ENCODE measurements at regions of chr17 and their contacts with region 1.

Region 1: DNA sequence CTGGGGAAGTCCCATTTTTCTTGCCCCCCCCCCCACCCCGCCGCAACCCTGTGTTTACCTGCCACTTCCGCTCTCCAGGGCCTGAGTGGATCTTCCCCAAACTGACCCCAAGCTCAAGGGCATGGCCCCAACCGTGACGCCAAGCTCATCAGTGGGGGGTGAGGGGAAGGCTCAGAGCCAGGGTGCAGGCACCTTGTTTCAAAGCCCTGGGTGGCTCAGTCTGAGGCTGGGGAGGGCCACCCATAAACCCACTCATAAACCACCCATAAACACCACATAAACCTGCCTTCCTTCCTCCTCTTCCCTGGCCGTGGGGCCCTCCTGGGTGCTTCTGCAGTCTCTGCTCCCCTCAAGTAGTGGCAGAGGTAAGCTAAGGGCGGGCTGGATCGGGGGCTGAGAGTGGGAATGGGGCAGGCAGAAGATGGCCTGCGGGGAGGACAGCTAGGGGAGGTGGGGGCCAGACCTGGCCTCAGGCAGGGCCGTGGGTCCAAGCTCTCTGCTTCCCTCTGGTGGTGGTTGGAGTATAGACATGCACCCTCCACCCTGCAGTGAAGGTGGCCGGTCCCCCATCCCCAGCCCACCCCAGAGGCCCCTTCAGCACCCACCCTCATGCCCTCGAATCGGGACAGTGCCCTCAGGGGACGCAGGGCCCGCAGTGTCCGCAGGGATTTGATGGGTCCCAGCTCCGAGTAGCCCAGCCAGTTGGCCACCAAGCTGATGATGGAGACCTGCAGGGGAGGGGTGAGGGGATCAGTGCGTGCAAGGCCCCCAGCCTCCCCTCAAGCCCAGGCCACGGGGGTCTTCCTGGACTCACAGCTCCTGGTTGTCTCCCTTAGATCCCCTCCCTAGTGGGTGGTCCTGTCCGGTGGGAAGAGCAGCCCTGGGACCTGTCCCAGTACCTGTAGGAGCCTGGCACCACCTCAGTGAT is 14.6 kb upstream of the CD79B start:
- DNase-seq: peak; percentile 23
- H3K4me3 ChIP-seq: no peak overlapping the region
- H3K27ac ChIP-seq: no peak overlapping the region
- H3K4me1 ChIP-seq: no peaks in the 10 kb centered on the region
- H3K27me3 ChIP-seq: no peaks in the 10 kb centered on the region
- CTCF ChIP-seq: peak; percentile 38 to 94
- POLR2A ChIP-seq: no peak

Region 2: GRCh38 chr17:63904316-63904715 is 42.4 kb before region 1 on chr17:
- CTCF ChIA-PET with region 1: interaction called, 13 read pairs
- POLR2A ChIA-PET with region 1: no interaction called
- dilution Hi-C with region 1: no loop called
- intact Hi-C with region 1: no loop called
- DNase-seq: no peak
- H3K4me3 ChIP-seq: no peak overlapping the region
- H3K27ac ChIP-seq: no peak overlapping the region
- H3K4me1 ChIP-seq: no peaks in the 10 kb centered on the region
- H3K27me3 ChIP-seq: peaks cover 5 to 8% of the 10 kb centered on the region in 2 experiments
- CTCF ChIP-seq: no peak
- POLR2A ChIP-seq: no peak

Region 3: GRCh38 chr17:63931099-63931561 is 15.6 kb before region 1 on chr17:
- CTCF ChIA-PET with region 1: interaction called, 26 read pairs
- POLR2A ChIA-PET with region 1: no interaction called
- dilution Hi-C with region 1: no loop called
- intact Hi-C with region 1: no loop called
- DNase-seq: no peak
- H3K4me3 ChIP-seq: no peak overlapping the region
- H3K27ac ChIP-seq: no peak overlapping the region
- H3K4me1 ChIP-seq: peaks cover 4% of the 10 kb centered on the region
- H3K27me3 ChIP-seq: no peaks in the 10 kb centered on the region
- CTCF ChIP-seq: no peak
- POLR2A ChIP-seq: no peak

Region 4: GRCh38 chr17:63967953-63968352 is 21.2 kb after region 1 on chr17:
- CTCF ChIA-PET with region 1: interaction called, 24 read pairs
- POLR2A ChIA-PET with region 1: no interaction called
- dilution Hi-C with region 1: no loop called
- intact Hi-C with region 1: no loop called
- DNase-seq: no peak
- H3K4me3 ChIP-seq: no peak overlapping the region
- H3K27ac ChIP-seq: no peak overlapping the region
- H3K4me1 ChIP-seq: no peaks in the 10 kb centered on the region
- H3K27me3 ChIP-seq: no peaks in the 10 kb centered on the region
- CTCF ChIP-seq: no peak
- POLR2A ChIP-seq: no peak

Region 5: GRCh38 chr17:63984651-63985386 is 38.1 kb after region 1 on chr17:
- CTCF ChIA-PET with region 1: interaction called, 42 read pairs
- POLR2A ChIA-PET with region 1: no interaction called
- dilution Hi-C with region 1: no loop called
- intact Hi-C with region 1: loop called (anchors 2 kb)
- DNase-seq: peak; percentile 93
- H3K4me3 ChIP-seq: no peak overlapping the region
- H3K27ac ChIP-seq: no peak overlapping the region
- H3K4me1 ChIP-seq: peaks cover 21% of the 10 kb centered on the region
- H3K27me3 ChIP-seq: no peaks in the 10 kb centered on the region
- CTCF ChIP-seq: no peak
- POLR2A ChIP-seq: no peak

Region 6: GRCh38 chr17:63998050-63998720 is 51.5 kb after region 1 on chr17 and contains the start of gene PRR29:
- CTCF ChIA-PET with region 1: interaction called, 20 read pairs
- POLR2A ChIA-PET with region 1: no interaction called
- dilution Hi-C with region 1: no loop called
- intact Hi-C with region 1: no loop called
- DNase-seq: peak; percentile 71
- H3K4me3 ChIP-seq: peak within 1 kb of the TSS; percentile 12 to 59 (median 37)
- H3K27ac ChIP-seq: peak within 1 kb of the TSS; percentile 23
- H3K4me1 ChIP-seq: peaks cover 42% of the 10 kb centered on the region
- H3K27me3 ChIP-seq: no peaks in the 10 kb centered on the region
- CTCF ChIP-seq: no peak
- POLR2A ChIP-seq: no peak
- total RNA-seq, gene PRR29: 0.78 and 1.2 TPM in 2 replicates

Region 7: DNA sequence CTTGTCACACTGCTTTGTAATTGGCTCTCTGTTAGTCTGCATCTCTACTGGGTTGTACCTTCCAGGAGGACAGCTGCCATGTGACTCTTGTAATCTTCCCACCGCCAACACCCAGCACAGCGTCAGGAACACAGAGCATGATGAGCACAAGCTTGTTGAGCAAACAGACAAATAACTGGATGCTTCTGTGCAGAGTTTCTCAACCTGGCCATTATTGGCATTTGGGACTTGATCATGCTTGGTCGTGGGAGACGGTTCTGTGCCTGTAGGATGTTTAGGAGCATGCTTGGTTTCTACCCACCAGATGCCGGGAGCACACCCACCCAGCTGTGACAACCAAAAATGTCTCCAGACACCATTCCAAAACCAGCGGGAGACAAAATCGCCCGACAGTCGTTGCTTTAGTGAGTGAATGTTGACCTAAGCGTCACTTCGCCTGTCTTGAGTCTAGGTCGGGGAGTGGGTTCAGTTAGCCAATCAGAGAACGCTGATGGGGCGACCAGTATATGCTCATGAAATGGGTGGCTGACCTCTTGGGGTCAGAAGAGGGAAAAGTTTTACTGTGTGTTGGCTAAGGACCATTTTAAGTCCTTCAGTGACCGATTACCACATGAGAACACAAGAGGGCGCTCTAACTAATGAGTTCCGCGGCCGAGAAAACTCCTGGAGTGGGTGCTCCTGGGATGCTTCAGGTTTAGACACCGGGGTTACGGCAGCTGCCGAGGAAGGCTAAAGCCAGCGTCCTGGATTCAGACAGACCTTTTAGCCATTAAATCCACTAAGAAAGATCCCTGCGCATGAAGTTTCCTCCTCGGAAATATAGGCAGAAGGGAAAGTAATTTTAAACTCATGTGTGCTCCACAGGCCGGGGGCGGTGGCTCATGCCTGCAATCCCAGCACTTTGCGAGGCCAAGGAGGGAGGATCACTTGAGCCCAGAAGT is 374.2 kb after region 1 on chr17:
- CTCF ChIA-PET with region 1: no interaction called
- POLR2A ChIA-PET with region 1: no interaction called
- dilution Hi-C with region 1: no loop called
- intact Hi-C with region 1: no loop called
- DNase-seq: peak; percentile 85
- H3K4me3 ChIP-seq: no peak overlapping the region
- H3K27ac ChIP-seq: no peak overlapping the region
- H3K4me1 ChIP-seq: peaks cover 33% of the 10 kb centered on the region
- H3K27me3 ChIP-seq: no peaks in the 10 kb centered on the region
- CTCF ChIP-seq: peak; percentile 70 to 80
- POLR2A ChIP-seq: no peak